Transverse colon (tissue), 4 donors: ENCODE measurements at regions of chr16 and their contacts with region 1.

Region 1: GRCh38 chr16:84511180-84511824 is 6.8 kb upstream of the MEAK7 start:
- DNase-seq: peak; percentile 88
- H3K4me3 ChIP-seq: no peak overlapping the region
- H3K27ac ChIP-seq: no peak overlapping the region
- H3K4me1 ChIP-seq: peaks cover 0 to 7% (median 2%) of the 10 kb centered on the region in 4 donors
- H3K27me3 ChIP-seq: no peaks in the 10 kb centered on the region
- CTCF ChIP-seq: peak; percentile 96 to 98 (median 98)
- EP300 ChIP-seq: no peak
- POLR2A ChIP-seq: no peak

Region 2: GRCh38 chr16:83031524-83031923 is 1479.8 kb before region 1 on chr16:
- in situ Hi-C with region 1: no loop called
- intact Hi-C with region 1: no loop called
- DNase-seq: no peak
- H3K4me3 ChIP-seq: no peak overlapping the region
- H3K27ac ChIP-seq: no peak overlapping the region
- H3K4me1 ChIP-seq: no peaks in the 10 kb centered on the region
- H3K27me3 ChIP-seq: no peaks in the 10 kb centered on the region
- CTCF ChIP-seq: no peak
- EP300 ChIP-seq: no peak
- POLR2A ChIP-seq: no peak

Region 3: GRCh38 chr16:84562174-84562815 is 51.0 kb after region 1 on chr16:
- in situ Hi-C with region 1: no loop called
- intact Hi-C with region 1: no loop called
- DNase-seq: peak; percentile 22
- H3K4me3 ChIP-seq: no peak overlapping the region
- H3K27ac ChIP-seq: no peak overlapping the region
- H3K4me1 ChIP-seq: peaks cover 0 to 39% (median 13%) of the 10 kb centered on the region in 4 donors
- H3K27me3 ChIP-seq: no peaks in the 10 kb centered on the region
- CTCF ChIP-seq: no peak
- EP300 ChIP-seq: no peak
- POLR2A ChIP-seq: no peak

Region 4: DNA sequence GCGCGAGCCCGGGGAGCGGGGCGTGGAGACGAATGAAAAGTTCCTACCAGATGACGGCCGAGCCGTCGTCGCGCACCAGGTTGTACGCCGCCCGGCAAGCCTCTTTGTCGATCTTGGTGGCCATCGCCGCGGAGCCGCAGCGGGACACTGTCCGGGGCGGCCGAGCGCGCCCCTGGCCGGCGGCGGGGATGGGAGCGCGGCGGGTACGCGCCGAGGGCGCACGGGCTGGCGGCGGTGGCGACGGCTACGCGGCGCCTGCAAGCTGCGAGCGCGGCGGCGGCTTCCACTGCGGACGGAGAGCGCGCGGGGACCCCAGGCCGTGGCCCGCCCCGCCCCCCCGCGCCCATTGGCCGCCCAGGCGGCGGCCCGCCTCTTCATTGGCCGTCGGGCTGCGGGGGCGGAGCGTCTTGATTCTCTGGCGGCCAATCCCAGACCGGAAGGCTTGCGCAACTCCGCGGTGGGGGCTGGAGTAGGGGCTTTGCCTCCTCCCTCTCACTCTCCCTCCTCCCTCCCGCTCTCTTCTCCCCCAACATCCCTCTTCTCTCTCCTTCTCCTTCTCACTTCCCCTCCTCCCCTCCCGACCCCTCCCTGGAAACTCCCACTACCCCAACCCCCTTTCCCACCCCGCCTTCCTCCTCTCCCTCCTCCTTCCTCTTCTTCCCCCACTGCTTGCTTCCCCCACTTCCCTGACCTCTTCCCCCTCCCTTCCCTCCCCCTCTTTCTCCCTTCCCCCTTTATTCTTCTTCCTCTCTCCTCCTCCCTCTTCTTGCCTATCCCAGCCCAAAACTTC is 106.7 kb after region 1 on chr16 and contains the start of gene COTL1:
- in situ Hi-C with region 1: loop called (anchors 5 kb)
- intact Hi-C with region 1: loop called (anchors 1 kb)
- DNase-seq: peak; percentile 97
- H3K4me3 ChIP-seq: peak within 1 kb of the TSS; percentile 14 to 94 (median 70)
- H3K27ac ChIP-seq: peak within 1 kb of the TSS; percentile 85 to 89 (median 86)
- H3K4me1 ChIP-seq: peaks cover 3 to 41% (median 29%) of the 10 kb centered on the region in 4 donors
- H3K27me3 ChIP-seq: no peaks in the 10 kb centered on the region
- CTCF ChIP-seq: no peak
- EP300 ChIP-seq: no peak
- POLR2A ChIP-seq: no peak
- total RNA-seq, gene COTL1: 31.1 to 78.9 (median 47.9) TPM

Region 5: GRCh38 chr16:84714028-84714427 is 202.7 kb after region 1 on chr16:
- in situ Hi-C with region 1: loop called in 2 of 4 experiments (anchors 10 to 25 kb)
- intact Hi-C with region 1: no loop called
- DNase-seq: no peak
- H3K4me3 ChIP-seq: no peak overlapping the region
- H3K27ac ChIP-seq: no peak overlapping the region
- H3K4me1 ChIP-seq: peaks cover 0 to 30% (median 9%) of the 10 kb centered on the region in 4 donors
- H3K27me3 ChIP-seq: no peaks in the 10 kb centered on the region
- CTCF ChIP-seq: no peak
- EP300 ChIP-seq: no peak
- POLR2A ChIP-seq: no peak

Region 6: GRCh38 chr16:84726079-84726668 is 214.9 kb after region 1 on chr16:
- in situ Hi-C with region 1: loop called in 3 of 4 experiments (anchors 5 to 25 kb)
- intact Hi-C with region 1: loop called (anchors 10 kb)
- DNase-seq: peak; percentile 93
- H3K4me3 ChIP-seq: peak overlapping the region in 1 of 4 donors; percentile 24
- H3K27ac ChIP-seq: peak overlapping the region; percentile 73 to 76 (median 74)
- H3K4me1 ChIP-seq: peaks cover 13 to 75% (median 51%) of the 10 kb centered on the region in 4 donors
- H3K27me3 ChIP-seq: no peaks in the 10 kb centered on the region
- CTCF ChIP-seq: peak; percentile 92 to 94 (median 93)
- EP300 ChIP-seq: no peak
- POLR2A ChIP-seq: no peak

Region 7: DNA sequence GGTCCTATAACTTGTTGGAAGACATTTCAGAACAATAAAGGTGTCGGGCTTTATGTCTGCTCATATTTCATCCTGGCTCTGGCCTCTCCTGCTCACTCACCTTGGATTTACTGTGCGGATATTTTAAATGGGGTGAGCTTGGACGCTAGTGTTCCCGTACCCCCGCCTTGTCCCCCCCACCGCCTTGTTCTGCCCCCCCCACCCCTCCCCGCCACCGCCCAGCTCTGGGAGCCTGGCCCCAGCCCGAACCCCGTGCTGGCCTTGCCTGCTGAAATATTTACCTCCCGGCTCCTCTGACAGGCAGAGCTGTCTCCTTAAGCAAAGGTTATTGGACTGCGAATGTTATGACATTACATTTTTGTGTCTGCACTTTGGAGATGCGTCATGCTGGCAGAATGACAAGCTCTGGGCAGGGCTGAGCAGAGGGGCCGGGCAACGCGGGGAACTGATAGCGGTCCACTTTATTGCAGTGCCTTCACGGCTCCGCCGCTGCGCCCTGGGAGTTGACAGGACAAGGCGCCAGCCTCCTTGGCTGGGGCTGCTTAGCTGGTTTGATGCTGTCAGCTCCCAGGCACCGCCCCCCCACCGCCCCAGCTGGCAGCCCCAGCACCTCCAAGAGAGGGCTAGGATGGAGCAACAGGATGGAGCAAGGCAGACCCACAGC is 879.3 kb after region 1 on chr16:
- in situ Hi-C with region 1: no loop called
- intact Hi-C with region 1: no loop called
- DNase-seq: peak; percentile 89
- H3K4me3 ChIP-seq: no peak overlapping the region
- H3K27ac ChIP-seq: peak overlapping the region; percentile 44 to 83 (median 60)
- H3K4me1 ChIP-seq: peaks cover 16 to 42% (median 26%) of the 10 kb centered on the region in 4 donors
- H3K27me3 ChIP-seq: no peaks in the 10 kb centered on the region
- CTCF ChIP-seq: no peak
- EP300 ChIP-seq: no peak
- POLR2A ChIP-seq: no peak